ENCODE measurements at regions of chr11 and their contacts with region 1.

Region 1: GRCh38 chr11:44483919-44484610 is 81.4 kb upstream of the CD82 start:
- DNase-seq: no peak
- H3K4me3 ChIP-seq: no peak overlapping the region
- CTCF ChIP-seq: peak; percentile 52

Region 2: DNA sequence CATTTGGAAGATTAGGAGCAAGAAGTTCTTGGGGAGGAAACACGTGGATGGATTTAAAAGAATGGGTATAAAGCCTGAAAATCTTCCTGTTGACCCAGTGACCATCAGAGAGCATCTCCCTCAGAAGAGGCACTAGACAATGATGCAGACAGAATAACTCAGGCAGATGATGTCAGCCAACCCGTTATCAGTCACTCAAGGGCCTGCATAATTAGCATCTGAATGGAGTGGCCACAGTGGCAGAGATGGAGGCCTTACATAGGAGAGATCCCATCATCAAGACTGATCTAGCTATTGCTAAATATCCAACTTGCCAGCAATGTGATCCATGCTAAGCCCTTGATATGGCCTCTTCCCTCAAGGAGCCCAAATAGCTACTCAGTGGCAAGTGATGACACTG is 10.7 kb after region 1 on chr11:
- CTCF ChIA-PET with region 1: interaction called, 11 read pairs
- POLR2A ChIA-PET with region 1: no interaction called
- DNase-seq: no peak
- H3K4me3 ChIP-seq: no peak overlapping the region
- CTCF ChIP-seq: no peak

Region 3: GRCh38 chr11:45247433-45247832 is 763.4 kb after region 1 on chr11:
- CTCF ChIA-PET with region 1: no interaction called
- POLR2A ChIA-PET with region 1: no interaction called
- DNase-seq: no peak
- H3K4me3 ChIP-seq: no peak overlapping the region
- CTCF ChIP-seq: no peak

Measured in AG04449 (cell line).